ENCODE measurements at regions of chr12 and their contacts with region 1.

Region 1: DNA sequence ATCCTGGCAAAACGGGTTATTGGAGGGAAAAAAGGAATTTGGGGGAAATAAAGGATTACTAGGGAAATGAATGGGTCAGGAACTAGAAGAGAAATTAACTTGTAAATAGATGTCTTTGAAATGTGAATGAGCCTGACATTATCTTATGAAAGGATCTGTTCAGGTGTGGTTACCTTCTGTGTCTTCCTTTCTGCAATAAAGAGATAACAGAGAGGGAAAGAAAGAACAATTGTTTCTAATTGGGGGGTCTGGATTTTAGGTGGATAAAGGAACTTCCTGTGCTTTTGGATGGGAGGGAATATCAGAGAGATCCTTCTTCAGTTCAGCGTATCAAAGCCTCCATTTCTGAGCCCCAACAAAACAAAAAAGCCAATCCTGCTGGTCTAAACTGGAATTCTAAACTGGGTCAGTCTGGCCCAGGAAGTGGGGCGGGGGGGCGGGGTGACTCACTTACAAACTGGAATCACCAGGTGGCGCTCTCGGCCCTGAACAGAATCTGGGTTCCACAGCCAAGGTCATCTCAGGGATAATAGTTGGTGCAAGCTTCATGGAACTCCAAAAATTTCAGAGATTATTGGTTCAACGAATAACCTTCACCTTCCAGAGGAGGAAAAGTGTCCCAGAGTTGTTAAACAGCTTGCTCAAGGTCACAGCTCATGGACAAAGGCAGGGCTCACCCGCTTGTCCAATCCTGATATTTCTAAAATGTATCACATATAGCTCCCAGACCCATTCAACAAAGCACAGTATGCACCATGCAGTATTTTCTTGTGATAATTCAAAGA is 15.2 kb upstream of the PEBP1 start:
- DNase-seq: peak; percentile 88 to 93 (median 90)
- ATAC-seq: peak; percentile 92
- H3K4me3 ChIP-seq: no peak overlapping the region
- H3K27ac ChIP-seq: peak overlapping the region; percentile 81
- H3K4me1 ChIP-seq: peaks cover 4 to 14% of the 10 kb centered on the region in 2 experiments; a peak in 4 of 5 replicates
- H3K27me3 ChIP-seq: no peaks in the 10 kb centered on the region
- CTCF ChIP-seq: peak in 2 of 3 experiments; percentile 55 to 64; a peak in 5 of 6 replicates
- EP300 ChIP-seq: no peak
- POLR2A ChIP-seq: no peak
- RAD21 ChIP-seq: peak in 1 of 2 experiments; percentile 55; a peak in 3 of 4 replicates

Region 2: DNA sequence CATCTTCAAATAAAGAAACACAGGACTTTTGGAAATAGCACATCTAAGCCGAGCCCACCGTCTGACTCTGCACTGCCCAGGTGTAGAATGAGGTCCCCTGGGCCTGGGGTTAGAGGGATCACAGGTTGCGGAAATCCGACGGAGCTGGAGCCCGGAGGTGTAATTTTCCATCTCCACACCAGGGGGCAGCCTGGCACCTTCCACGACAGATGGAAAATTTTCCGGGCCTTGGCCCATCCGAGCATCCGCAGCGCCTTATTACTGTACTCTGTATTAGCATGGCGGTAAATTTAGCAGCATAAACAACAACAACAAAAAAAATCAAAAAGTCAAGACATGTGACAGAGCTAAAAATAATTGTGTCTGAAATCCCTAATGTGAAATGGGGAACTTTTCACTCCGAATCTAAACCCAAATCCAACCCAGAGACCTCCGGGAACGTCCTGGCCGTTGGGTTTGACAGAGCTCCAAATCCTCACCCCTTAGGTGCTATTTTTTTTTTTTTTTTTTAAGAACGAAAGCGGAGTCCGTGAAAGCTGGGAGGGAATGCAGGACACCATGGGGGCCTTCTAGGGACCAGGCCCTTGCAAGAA is 245.8 kb before region 1 on chr12:
- CTCF ChIA-PET with region 1: no interaction called
- POLR2A ChIA-PET with region 1: interaction called, 3 read pairs
- in situ Hi-C with region 1: no loop called
- intact Hi-C with region 1: loop called (anchors 10 kb)
- DNase-seq: peak; percentile 67 to 76 (median 74)
- ATAC-seq: peak; percentile 92
- H3K4me3 ChIP-seq: no peak overlapping the region
- H3K27ac ChIP-seq: no peak overlapping the region
- H3K4me1 ChIP-seq: peaks cover 0 to 4% of the 10 kb centered on the region in 2 experiments; a peak in 1 of 5 replicates
- H3K27me3 ChIP-seq: peaks cover 17 to 32% of the 10 kb centered on the region in 2 experiments; a peak in 4 of 5 replicates
- CTCF ChIP-seq: peak; percentile 79 to 87 (median 85)
- EP300 ChIP-seq: no peak
- POLR2A ChIP-seq: no peak
- RAD21 ChIP-seq: peak; percentile 60 to 87

Region 3: DNA sequence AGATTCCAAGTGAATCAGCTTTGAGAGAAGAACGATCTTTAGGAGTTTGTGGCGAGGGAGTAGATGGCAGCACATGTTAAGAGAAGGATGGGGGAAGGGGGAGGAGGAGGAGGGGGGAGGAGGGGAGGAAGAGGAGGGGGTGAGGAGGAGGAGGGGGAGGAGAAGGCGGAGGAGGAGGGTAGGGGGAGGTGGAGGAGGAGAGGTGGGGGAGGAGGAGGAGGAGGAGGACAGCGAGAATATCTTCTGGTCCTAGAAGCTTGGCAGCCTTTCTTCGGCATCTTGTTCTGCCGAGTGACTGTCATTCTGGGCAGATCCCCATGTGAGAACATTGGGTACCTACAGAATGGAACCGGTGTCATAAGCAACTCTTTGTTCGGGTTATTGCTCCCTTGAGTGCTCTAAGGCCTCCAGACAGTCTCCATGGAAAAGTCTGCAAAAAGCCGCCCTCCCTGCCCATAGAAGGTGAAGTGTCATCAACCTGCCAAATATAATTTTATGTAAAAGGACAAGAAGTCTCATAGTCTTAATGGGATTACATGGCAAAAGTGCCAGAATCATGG is 97.4 kb before region 1 on chr12:
- CTCF ChIA-PET with region 1: no interaction called
- POLR2A ChIA-PET with region 1: no interaction called
- in situ Hi-C with region 1: no loop called
- intact Hi-C with region 1: no loop called
- DNase-seq: no peak
- ATAC-seq: no peak
- H3K4me3 ChIP-seq: no peak overlapping the region
- H3K27ac ChIP-seq: no peak overlapping the region
- H3K4me1 ChIP-seq: peaks cover 0 to 10% of the 10 kb centered on the region in 2 experiments; a peak in 2 of 5 replicates
- H3K27me3 ChIP-seq: no peaks in the 10 kb centered on the region
- CTCF ChIP-seq: no peak
- EP300 ChIP-seq: no peak
- POLR2A ChIP-seq: no peak
- RAD21 ChIP-seq: no peak

Region 4: GRCh38 chr12:118135788-118136558 is 15.2 kb after region 1 on chr12 and contains the start of gene PEBP1:
- CTCF ChIA-PET with region 1: no interaction called
- POLR2A ChIA-PET with region 1: interaction called, 10 read pairs
- in situ Hi-C with region 1: no loop called
- intact Hi-C with region 1: no loop called
- DNase-seq: peak; percentile 93 to 98 (median 97)
- ATAC-seq: peak; percentile 99
- H3K4me3 ChIP-seq: peak within 1 kb of the TSS; percentile 80
- H3K27ac ChIP-seq: peak within 1 kb of the TSS; percentile 77
- H3K4me1 ChIP-seq: peaks cover 2 to 27% of the 10 kb centered on the region in 2 experiments; a peak in 3 of 5 replicates
- H3K27me3 ChIP-seq: no peaks in the 10 kb centered on the region
- CTCF ChIP-seq: peak in 1 of 3 experiments; percentile 20; a peak in 1 of 6 replicates
- EP300 ChIP-seq: no peak
- POLR2A ChIP-seq: peak; percentile 86
- RAD21 ChIP-seq: peak in 1 of 2 experiments; percentile 8; a peak in 1 of 4 replicates
- polyA plus RNA-seq, gene PEBP1: 77.3 to 113 TPM

Region 5: DNA sequence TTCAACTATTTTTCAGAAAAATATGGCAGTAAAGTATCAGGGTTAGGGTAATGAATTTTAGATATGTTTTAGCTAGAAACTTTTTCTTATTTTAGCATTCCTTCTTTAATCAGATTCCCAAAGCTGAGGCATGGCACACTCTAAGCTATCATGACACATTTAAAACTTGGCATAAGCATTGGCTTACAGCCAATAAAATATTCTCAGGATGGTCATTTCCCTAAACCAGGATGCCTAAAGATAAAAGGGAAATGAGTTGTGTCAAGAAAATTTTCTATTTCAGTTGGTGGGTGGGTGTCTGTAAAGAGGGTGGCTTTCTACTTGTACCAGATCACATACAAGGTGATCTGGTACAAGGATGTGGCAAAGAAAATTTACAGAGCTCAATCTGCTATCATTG is 62.9 kb after region 1 on chr12:
- CTCF ChIA-PET with region 1: interaction called, 4 read pairs
- POLR2A ChIA-PET with region 1: no interaction called
- in situ Hi-C with region 1: no loop called
- intact Hi-C with region 1: loop called (anchors 5 kb)
- DNase-seq: no peak
- ATAC-seq: no peak
- H3K4me3 ChIP-seq: no peak overlapping the region
- H3K27ac ChIP-seq: no peak overlapping the region
- H3K4me1 ChIP-seq: peaks cover 0 to 12% of the 10 kb centered on the region in 2 experiments; a peak in 3 of 5 replicates
- H3K27me3 ChIP-seq: no peaks in the 10 kb centered on the region
- CTCF ChIP-seq: no peak
- EP300 ChIP-seq: no peak
- POLR2A ChIP-seq: no peak
- RAD21 ChIP-seq: no peak

Region 6: DNA sequence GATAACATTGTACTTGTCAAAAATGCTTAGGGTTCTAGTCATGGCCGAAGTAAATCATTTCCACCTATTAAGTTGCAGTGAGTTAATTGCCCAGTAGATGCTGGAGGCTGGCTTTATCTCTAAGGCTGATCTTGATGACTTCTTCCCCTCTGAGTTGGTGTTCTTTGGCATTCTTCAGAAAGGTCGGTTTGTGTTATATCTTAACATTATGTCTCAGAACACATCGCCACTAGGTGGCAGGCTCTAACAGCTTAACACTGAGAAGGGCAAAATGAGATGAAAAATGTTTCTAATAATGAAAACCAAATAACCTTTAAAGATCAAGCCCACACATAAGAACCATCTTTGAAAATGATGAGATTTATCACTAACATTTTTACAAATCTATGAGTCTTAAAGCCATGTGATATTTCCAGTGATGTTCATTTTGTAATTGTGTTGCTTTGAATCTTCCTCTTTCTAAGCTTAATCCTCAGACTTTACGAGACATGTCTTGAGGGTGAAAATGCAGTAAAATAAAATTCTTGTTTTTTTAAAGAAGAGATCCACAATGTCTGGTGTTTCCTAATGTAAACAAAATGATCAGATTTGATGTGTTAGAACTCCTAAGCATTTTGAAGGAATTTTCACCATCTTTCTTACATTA is 284.2 kb after region 1 on chr12:
- CTCF ChIA-PET with region 1: no interaction called
- POLR2A ChIA-PET with region 1: no interaction called
- in situ Hi-C with region 1: no loop called
- intact Hi-C with region 1: no loop called
- DNase-seq: peak; percentile 42 to 74 (median 72)
- ATAC-seq: peak; percentile 85
- H3K4me3 ChIP-seq: no peak overlapping the region
- H3K27ac ChIP-seq: no peak overlapping the region
- H3K4me1 ChIP-seq: peaks cover 5% of the 10 kb centered on the region in 2 experiments; a peak in 3 of 5 replicates
- H3K27me3 ChIP-seq: no peaks in the 10 kb centered on the region
- CTCF ChIP-seq: peak; percentile 57 to 81 (median 71)
- EP300 ChIP-seq: no peak
- POLR2A ChIP-seq: no peak
- RAD21 ChIP-seq: peak; percentile 53 to 76

Region 7: GRCh38 chr12:118488034-118488433 is 367.3 kb after region 1 on chr12:
- CTCF ChIA-PET with region 1: no interaction called
- POLR2A ChIA-PET with region 1: no interaction called
- in situ Hi-C with region 1: no loop called
- intact Hi-C with region 1: no loop called
- DNase-seq: no peak
- ATAC-seq: no peak
- H3K4me3 ChIP-seq: no peak overlapping the region
- H3K27ac ChIP-seq: no peak overlapping the region
- H3K4me1 ChIP-seq: no peaks in the 10 kb centered on the region
- H3K27me3 ChIP-seq: no peaks in the 10 kb centered on the region
- CTCF ChIP-seq: no peak
- EP300 ChIP-seq: no peak
- POLR2A ChIP-seq: no peak
- RAD21 ChIP-seq: no peak

Measured in K562 (cell line).